ENCODE measurements at regions of chr16 and their contacts with region 1.

Region 1: DNA sequence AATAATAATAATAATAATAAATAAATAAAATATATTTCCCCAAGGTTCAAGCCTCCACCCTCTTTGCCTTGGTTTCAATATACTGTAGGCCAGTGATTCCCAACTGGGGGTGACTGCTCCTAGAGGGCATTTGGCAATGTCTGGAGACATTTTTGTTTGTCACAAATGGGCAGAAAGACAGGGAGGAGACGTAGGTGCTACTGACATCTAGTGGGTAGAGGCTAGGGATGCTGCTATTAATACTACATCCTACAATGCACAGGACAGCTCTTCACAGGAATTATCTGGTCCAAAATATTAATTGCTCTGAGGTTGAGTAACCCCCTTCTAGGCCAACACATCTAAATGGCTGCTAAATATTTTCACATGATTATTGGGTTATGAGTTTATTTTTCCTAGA is 12.8 kb upstream of the PRR14 start:
- DNase-seq: no peak
- H3K4me3 ChIP-seq: no peak overlapping the region
- H3K27ac ChIP-seq: no peak overlapping the region
- H3K4me1 ChIP-seq: peaks cover 5 to 37% (median 13%) of the 10 kb centered on the region in 3 donors
- H3K27me3 ChIP-seq: no peaks in the 10 kb centered on the region
- CTCF ChIP-seq: peak in 5 of 6 experiments; percentile 17 to 53 (median 25)
- POLR2A ChIP-seq: no peak

Region 2: DNA sequence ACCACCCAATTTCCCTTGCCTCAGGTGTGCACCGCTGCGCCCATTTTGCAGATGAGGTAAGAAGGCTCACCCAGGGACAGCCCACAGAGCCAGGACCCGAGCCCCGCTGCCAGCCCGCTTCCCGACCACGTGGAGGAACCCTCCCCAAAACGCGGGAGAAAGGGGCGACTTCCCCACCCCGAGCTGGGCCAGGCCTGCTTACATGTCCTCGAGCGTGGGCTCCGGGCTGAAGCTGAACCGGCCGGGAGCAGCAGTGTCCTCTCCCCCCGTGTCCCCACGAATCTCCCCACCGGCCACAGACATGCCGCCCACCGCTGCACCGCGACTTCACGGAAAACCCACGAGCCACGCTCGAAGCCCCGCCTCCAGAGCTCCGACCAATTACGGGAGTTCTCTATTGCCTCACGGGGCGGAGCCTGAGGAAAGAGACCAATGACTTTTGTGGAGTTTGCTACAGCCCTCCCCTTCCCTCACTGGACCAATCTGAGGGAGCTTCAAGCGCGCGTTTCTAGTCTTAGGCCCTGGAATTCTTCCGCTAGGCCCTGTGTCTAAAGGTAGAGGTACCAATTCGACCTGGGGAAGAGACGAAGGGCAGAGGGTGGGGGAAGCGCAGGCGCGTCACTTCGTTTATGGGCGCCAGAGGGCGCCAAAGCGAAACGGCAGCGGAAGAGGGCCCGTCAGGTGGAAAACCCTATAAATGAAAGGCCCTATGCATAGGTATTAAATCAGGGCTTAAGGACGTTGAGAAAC is 208.1 kb before region 1 on chr16 and contains the start of gene DCTPP1:
- intact Hi-C with region 1: loop called (anchors 10 kb)
- DNase-seq: peak; percentile 80
- H3K4me3 ChIP-seq: peak within 1 kb of the TSS; percentile 52 to 77 (median 76)
- H3K27ac ChIP-seq: peak within 1 kb of the TSS; percentile 83 to 91 (median 86)
- H3K4me1 ChIP-seq: peaks cover 12 to 33% (median 17%) of the 10 kb centered on the region in 3 donors
- H3K27me3 ChIP-seq: no peaks in the 10 kb centered on the region
- CTCF ChIP-seq: peak; percentile 61 to 97 (median 92)
- POLR2A ChIP-seq: peak in 2 of 4 donors; percentile 13 to 20
- total RNA-seq, gene DCTPP1: 7.4 to 28.6 (median 22.7) TPM

Region 3: GRCh38 chr16:30698139-30698815 is 60.3 kb after region 1 on chr16:
- intact Hi-C with region 1: no loop called
- DNase-seq: peak; percentile 94
- H3K4me3 ChIP-seq: peak overlapping the region; percentile 79 to 100 (median 95)
- H3K27ac ChIP-seq: peak overlapping the region; percentile 99 to 100 (median 100)
- H3K4me1 ChIP-seq: peaks cover 4 to 48% (median 22%) of the 10 kb centered on the region in 3 donors
- H3K27me3 ChIP-seq: no peaks in the 10 kb centered on the region
- CTCF ChIP-seq: peak in 1 of 6 experiments; percentile 15
- POLR2A ChIP-seq: peak in 3 of 4 donors; percentile 62 to 80 (median 66)